ENCODE measurements at regions of chr1 and their contacts with region 1.

Region 1: GRCh38 chr1:92994105-92994712 is 32.9 kb upstream of the DIPK1A start:
- DNase-seq: peak; percentile 20 to 91 (median 68)
- ATAC-seq: peak; percentile 92
- H3K4me3 ChIP-seq: no peak overlapping the region
- H3K4me3 Mint-ChIP-seq: peak overlapping the region; percentile 56
- H3K27ac ChIP-seq: no peak overlapping the region
- H3K27ac Mint-ChIP-seq: peak overlapping the region; percentile 73
- H3K4me1 ChIP-seq: peaks cover 47% of the 10 kb centered on the region
- H3K4me1 Mint-ChIP-seq: peaks cover 48% of the 10 kb centered on the region
- H3K27me3 ChIP-seq: no peaks in the 10 kb centered on the region
- H3K27me3 Mint-ChIP-seq: no peaks in the 10 kb centered on the region
- CTCF ChIP-seq: peak; percentile 91

Region 2: DNA sequence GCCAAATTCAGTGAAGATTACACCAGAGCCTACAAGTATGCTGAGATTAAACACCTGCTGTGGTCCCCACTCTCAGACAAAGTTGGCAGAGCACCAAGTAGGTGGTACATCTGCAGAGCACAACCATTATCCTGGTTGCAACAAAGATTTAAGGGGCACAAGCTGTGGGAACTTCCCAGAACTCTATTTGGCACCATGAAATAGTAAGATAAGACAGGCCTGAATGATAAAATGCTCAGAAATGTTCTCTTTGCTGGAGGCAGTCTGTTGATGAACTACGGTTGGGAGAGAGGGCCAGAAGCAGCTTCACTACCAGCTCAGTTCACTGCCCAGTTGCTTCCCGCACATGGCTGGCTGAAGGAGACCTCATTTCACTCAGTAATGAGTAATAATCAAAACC is 142.5 kb before region 1 on chr1:
- CTCF ChIA-PET with region 1: interaction called, 12 read pairs
- POLR2A ChIA-PET with region 1: interaction called, 4 read pairs
- intact Hi-C with region 1: no loop called
- DNase-seq: no peak
- ATAC-seq: no peak
- H3K4me3 ChIP-seq: no peak overlapping the region
- H3K4me3 Mint-ChIP-seq: no peak overlapping the region
- H3K27ac ChIP-seq: no peak overlapping the region
- H3K27ac Mint-ChIP-seq: peak overlapping the region; percentile 46
- H3K4me1 ChIP-seq: peaks cover 5% of the 10 kb centered on the region
- H3K4me1 Mint-ChIP-seq: peaks cover 12% of the 10 kb centered on the region
- H3K27me3 ChIP-seq: no peaks in the 10 kb centered on the region
- H3K27me3 Mint-ChIP-seq: no peaks in the 10 kb centered on the region
- CTCF ChIP-seq: no peak

Region 3: DNA sequence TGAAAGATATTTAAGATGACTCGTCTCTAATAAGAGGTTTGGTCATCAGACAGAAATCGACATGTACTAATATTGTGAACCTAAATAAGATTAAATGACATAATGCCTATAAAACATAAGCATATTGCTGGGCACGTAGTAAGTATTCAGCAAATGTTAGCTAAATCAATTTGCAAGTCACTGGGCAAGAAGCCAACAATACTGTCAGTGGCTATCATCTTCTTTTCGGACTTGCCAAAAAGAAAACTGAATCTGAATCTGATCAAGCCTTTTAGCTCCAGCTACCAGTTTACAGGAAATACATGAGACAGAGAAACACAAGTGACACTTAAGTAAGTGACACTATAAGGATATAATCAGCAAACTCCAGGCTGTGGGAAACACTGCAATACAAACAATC is 116.4 kb before region 1 on chr1:
- CTCF ChIA-PET with region 1: interaction called, 10 read pairs
- POLR2A ChIA-PET with region 1: no interaction called
- intact Hi-C with region 1: no loop called
- DNase-seq: peak in 2 of 14 experiments; percentile 24 to 53
- ATAC-seq: peak; percentile 41
- H3K4me3 ChIP-seq: no peak overlapping the region
- H3K4me3 Mint-ChIP-seq: peak overlapping the region; percentile 23
- H3K27ac ChIP-seq: peak overlapping the region; percentile 19 to 33
- H3K27ac Mint-ChIP-seq: peak overlapping the region; percentile 86
- H3K4me1 ChIP-seq: peaks cover 7% of the 10 kb centered on the region
- H3K4me1 Mint-ChIP-seq: peaks cover 43% of the 10 kb centered on the region
- H3K27me3 ChIP-seq: no peaks in the 10 kb centered on the region
- H3K27me3 Mint-ChIP-seq: no peaks in the 10 kb centered on the region
- CTCF ChIP-seq: no peak

Region 4: GRCh38 chr1:92968138-92969032 is 25.8 kb before region 1 on chr1:
- CTCF ChIA-PET with region 1: interaction called, 105 read pairs
- POLR2A ChIA-PET with region 1: interaction called, 36 read pairs
- intact Hi-C with region 1: loop called (anchors 1 kb)
- DNase-seq: peak in 4 of 14 experiments; percentile 35 to 75 (median 72)
- ATAC-seq: peak; percentile 47
- H3K4me3 ChIP-seq: no peak overlapping the region
- H3K4me3 Mint-ChIP-seq: no peak overlapping the region
- H3K27ac ChIP-seq: no peak overlapping the region
- H3K27ac Mint-ChIP-seq: peak overlapping the region; percentile 5
- H3K4me1 ChIP-seq: peaks cover 47% of the 10 kb centered on the region
- H3K4me1 Mint-ChIP-seq: peaks cover 30% of the 10 kb centered on the region
- H3K27me3 ChIP-seq: no peaks in the 10 kb centered on the region
- H3K27me3 Mint-ChIP-seq: no peaks in the 10 kb centered on the region
- CTCF ChIP-seq: peak; percentile 79

Region 5: GRCh38 chr1:93207211-93207610 is 213.0 kb after region 1 on chr1:
- CTCF ChIA-PET with region 1: no interaction called
- POLR2A ChIA-PET with region 1: no interaction called
- intact Hi-C with region 1: no loop called
- DNase-seq: no peak
- ATAC-seq: no peak
- H3K4me3 ChIP-seq: no peak overlapping the region
- H3K4me3 Mint-ChIP-seq: no peak overlapping the region
- H3K27ac ChIP-seq: no peak overlapping the region
- H3K27ac Mint-ChIP-seq: no peak overlapping the region
- H3K4me1 ChIP-seq: no peaks in the 10 kb centered on the region
- H3K4me1 Mint-ChIP-seq: no peaks in the 10 kb centered on the region
- H3K27me3 ChIP-seq: no peaks in the 10 kb centered on the region
- H3K27me3 Mint-ChIP-seq: no peaks in the 10 kb centered on the region
- CTCF ChIP-seq: no peak

Measured in CD4-positive, alpha-beta T cell (primary cell).